ENCODE measurements at regions of chr20 and their contacts with region 1.

Region 1: GRCh38 chr20:39264506-39265172 is 302.5 kb downstream of the DHX35 start:
- DNase-seq: peak; percentile 39 to 75
- H3K4me3 ChIP-seq: no peak overlapping the region
- H3K27ac ChIP-seq: no peak overlapping the region
- H3K4me1 ChIP-seq: no peaks in the 10 kb centered on the region
- H3K27me3 ChIP-seq: no peaks in the 10 kb centered on the region
- CTCF ChIP-seq: peak; percentile 67 to 93 (median 86)
- EP300 ChIP-seq: no peak
- POLR2A ChIP-seq: no peak
- RAD21 ChIP-seq: peak; percentile 70 to 79

Region 2: DNA sequence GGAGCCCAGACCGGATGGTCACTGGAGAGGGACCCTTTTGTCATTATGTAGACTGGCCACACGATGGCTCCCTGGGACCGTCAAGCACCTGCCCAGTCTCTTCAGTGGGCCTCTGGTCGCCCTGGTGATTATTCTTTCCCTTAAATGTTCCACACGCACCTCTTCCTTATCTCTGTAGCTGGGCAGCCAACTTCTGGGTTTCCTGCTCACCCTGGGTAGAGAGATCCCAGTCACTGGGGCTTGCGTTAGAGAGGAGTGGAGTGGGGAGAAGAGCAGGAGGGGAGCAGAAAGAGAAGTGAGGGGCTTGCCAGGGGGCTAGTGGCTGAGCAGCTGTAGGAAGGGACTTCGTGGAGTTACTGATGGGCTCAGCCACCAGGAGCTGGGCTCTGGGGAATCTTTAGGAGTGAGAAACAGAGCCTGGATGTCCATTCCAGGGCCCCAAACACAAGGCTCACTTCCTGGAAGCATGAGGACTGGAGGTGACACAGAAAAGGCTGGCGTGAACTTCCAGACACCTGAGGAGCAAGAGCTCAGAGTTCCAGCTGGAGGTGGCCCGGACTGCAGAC is 152.4 kb before region 1 on chr20:
- CTCF ChIA-PET with region 1: interaction called, 100 read pairs
- POLR2A ChIA-PET with region 1: no interaction called
- DNase-seq: peak; percentile 54 to 73
- H3K4me3 ChIP-seq: no peak overlapping the region
- H3K27ac ChIP-seq: no peak overlapping the region
- H3K4me1 ChIP-seq: peaks cover 1 to 14% (median 5%) of the 10 kb centered on the region in 4 experiments; a peak in 6 of 7 replicates
- H3K27me3 ChIP-seq: no peaks in the 10 kb centered on the region
- CTCF ChIP-seq: peak; percentile 76 to 86 (median 80)
- EP300 ChIP-seq: no peak
- POLR2A ChIP-seq: no peak
- RAD21 ChIP-seq: peak; percentile 96 to 97

Region 3: DNA sequence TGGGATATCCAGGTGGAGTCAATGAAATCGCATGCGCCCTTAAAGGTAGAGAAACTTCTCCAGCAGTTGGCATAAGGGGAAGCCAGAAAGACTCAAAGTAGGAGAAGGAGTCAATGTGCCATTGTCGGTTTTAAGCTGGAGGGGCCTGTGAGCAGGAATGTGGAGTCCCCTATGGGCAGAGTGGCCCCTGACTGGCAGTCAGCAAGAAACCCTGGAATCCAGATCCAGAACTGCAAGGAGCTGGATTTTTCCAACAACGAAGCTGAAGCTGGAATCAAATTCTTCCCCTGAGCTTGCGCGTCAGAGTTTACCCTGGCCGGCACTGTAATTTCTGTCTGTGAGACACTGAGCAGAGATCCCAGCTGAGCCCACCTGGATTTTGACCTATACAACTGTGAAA is 12.5 kb after region 1 on chr20:
- CTCF ChIA-PET with region 1: interaction called, 15 read pairs
- POLR2A ChIA-PET with region 1: no interaction called
- DNase-seq: no peak
- H3K4me3 ChIP-seq: no peak overlapping the region
- H3K27ac ChIP-seq: no peak overlapping the region
- H3K4me1 ChIP-seq: peaks cover 0 to 5% (median 2%) of the 10 kb centered on the region in 4 experiments; a peak in 5 of 7 replicates
- H3K27me3 ChIP-seq: 0 out of 7 replicates have a peak, but pooled peaks cover 0 to 4% (median under 1%) of the 10 kb centered on the region in 4 experiments
- CTCF ChIP-seq: no peak
- EP300 ChIP-seq: no peak
- POLR2A ChIP-seq: no peak
- RAD21 ChIP-seq: no peak

Region 4: GRCh38 chr20:39289316-39289715 is 24.7 kb after region 1 on chr20:
- CTCF ChIA-PET with region 1: interaction called, 44 read pairs
- POLR2A ChIA-PET with region 1: no interaction called
- DNase-seq: peak in 1 of 2 experiments; percentile 66
- H3K4me3 ChIP-seq: no peak overlapping the region
- H3K27ac ChIP-seq: no peak overlapping the region
- H3K4me1 ChIP-seq: peaks cover 2 to 17% (median 10%) of the 10 kb centered on the region in 4 experiments; a peak in 5 of 7 replicates
- H3K27me3 ChIP-seq: no peaks in the 10 kb centered on the region
- CTCF ChIP-seq: peak; percentile 43 to 71 (median 70)
- EP300 ChIP-seq: no peak
- POLR2A ChIP-seq: no peak
- RAD21 ChIP-seq: peak; percentile 57 to 74; a peak in 3 of 4 replicates

Region 5: DNA sequence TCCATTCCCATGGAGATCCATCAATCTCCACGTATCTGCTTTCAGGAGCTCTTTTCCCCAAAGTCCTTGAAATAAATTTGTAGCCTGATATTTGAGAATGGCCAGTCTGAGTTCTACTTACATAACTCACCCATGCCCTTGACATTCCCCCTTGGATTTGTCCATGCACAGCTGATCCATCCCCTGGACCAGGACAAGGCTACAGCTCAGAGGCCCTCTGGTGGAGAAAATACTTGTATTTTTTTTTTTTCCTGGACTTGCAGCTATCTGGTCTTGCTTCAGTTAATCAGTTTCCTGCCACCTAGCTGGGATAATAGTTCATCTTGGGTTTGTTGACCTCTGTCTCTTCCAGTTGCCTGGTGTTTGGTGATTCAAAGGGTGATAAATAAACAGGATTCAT is 165.1 kb after region 1 on chr20:
- CTCF ChIA-PET with region 1: interaction called, 42 read pairs
- POLR2A ChIA-PET with region 1: no interaction called
- DNase-seq: no peak
- H3K4me3 ChIP-seq: no peak overlapping the region
- H3K27ac ChIP-seq: no peak overlapping the region
- H3K4me1 ChIP-seq: no peaks in the 10 kb centered on the region
- H3K27me3 ChIP-seq: no peaks in the 10 kb centered on the region
- CTCF ChIP-seq: peak; percentile 10 to 72 (median 50)
- EP300 ChIP-seq: no peak
- POLR2A ChIP-seq: no peak
- RAD21 ChIP-seq: peak; percentile 66 to 75

Region 6: GRCh38 chr20:39874049-39874888 is 609.6 kb after region 1 on chr20:
- CTCF ChIA-PET with region 1: interaction called, 19 read pairs
- POLR2A ChIA-PET with region 1: no interaction called
- DNase-seq: peak; percentile 62 to 88
- H3K4me3 ChIP-seq: no peak overlapping the region
- H3K27ac ChIP-seq: no peak overlapping the region
- H3K4me1 ChIP-seq: no peaks in the 10 kb centered on the region; a peak in 1 of 7 replicates
- H3K27me3 ChIP-seq: no peaks in the 10 kb centered on the region
- CTCF ChIP-seq: peak; percentile 95 to 98 (median 96)
- EP300 ChIP-seq: no peak
- POLR2A ChIP-seq: no peak
- RAD21 ChIP-seq: peak; percentile 87 to 90

Measured in H1 (cell line).